ENCODE measurements at regions of chr17 and their contacts with region 1.

Region 1: DNA sequence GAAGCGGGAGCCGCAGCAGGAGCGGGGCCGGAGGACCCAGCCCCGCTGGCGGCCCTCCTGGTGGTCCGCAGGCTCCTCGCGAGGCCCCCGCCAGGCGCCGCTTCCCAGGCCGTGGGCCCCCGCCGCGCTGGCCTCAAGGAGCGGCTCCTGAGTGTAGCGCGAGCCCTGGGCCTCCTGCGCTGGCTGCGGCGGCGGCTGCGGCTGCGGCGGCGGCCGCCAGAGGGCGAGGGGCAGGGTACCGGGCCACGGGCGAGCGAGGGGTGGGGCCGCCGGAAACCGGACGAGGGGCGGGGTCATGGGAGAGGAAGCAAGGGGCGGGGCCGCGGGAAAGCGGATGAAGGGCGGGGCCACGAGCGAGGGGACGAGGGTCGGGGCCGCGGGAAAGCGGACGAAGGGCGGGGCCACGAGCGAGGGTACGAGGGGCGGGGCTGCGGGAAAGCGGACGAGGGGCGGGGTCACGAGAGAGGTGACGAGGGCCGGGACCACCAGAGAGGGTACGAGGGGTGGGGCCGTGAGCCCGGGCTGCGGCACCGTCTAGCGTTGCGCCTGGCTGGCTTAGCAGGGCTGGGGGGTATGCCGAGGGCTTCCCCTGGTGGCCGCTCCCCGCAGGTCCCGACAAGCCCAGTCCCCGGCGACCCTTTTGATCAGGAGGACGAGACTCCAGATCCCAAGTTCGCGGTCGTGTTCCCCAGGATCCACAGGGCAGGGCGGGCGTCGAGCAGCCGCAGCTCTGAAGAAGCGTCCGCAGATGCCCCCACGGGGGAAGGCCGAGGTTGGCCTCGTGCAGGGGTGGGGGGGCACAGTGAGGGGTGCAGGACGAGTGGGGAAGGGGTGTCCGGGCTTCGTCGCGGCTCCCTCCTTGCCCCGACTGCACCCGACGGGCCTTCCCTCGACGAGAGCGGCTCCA is 1.7 kb downstream of the MYO15B start:
- DNase-seq: peak; percentile 100
- H3K4me3 ChIP-seq: peak overlapping the region; percentile 62 to 64
- H3K27ac ChIP-seq: peak overlapping the region in 1 of 2 experiments; percentile 53; a peak in 1 of 4 replicates
- H3K4me1 ChIP-seq: peaks cover 0 to 16% of the 10 kb centered on the region in 2 experiments; a peak in 1 of 4 replicates
- H3K27me3 ChIP-seq: no peaks in the 10 kb centered on the region
- CTCF ChIP-seq: peak; percentile 60
- EP300 ChIP-seq: peak in 1 of 2 experiments; percentile 68; a peak in 1 of 4 replicates
- RAD21 ChIP-seq: peak; percentile 34

Region 2: GRCh38 chr17:75571197-75571873 is 17.9 kb before region 1 on chr17:
- CTCF ChIA-PET with region 1: interaction called, 11 read pairs
- POLR2A ChIA-PET with region 1: no interaction called
- DNase-seq: no peak
- H3K4me3 ChIP-seq: no peak overlapping the region
- H3K27ac ChIP-seq: no peak overlapping the region
- H3K4me1 ChIP-seq: no peaks in the 10 kb centered on the region; a peak in 1 of 4 replicates
- H3K27me3 ChIP-seq: no peaks in the 10 kb centered on the region
- CTCF ChIP-seq: no peak
- EP300 ChIP-seq: no peak
- RAD21 ChIP-seq: no peak